Activated B cell treated with CpG ODN at 0.5 μM for 24 hours (primary cell): ENCODE measurements at regions of chr10 and their contacts with region 1.

Region 1: DNA sequence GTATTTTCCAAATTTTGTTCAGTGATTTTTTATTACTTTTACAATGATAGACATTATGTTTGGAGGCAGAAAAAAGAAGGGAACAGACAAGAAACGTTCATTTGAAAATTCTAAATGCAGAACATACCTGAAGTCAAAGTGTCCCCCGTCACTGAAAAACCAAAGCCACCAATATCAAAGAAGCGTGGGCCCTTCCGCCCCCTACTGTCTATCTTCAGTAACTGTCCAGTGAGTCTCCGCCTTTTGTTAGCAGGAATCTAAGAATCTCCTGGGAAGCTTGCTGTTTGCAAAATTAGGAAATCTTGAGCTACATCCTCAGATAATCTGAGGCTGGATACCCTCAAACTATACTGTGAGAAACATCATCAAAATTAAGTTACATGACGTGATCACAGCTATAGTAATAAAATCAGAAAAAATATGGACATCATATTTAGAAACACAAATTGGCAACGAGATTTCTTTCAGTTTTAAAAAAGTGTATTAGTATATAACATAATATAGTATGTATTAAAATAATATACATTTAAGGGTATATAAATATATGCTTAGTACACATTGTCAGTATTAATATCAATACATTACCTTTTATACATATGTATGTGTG is 169.3 kb upstream of the AKR1E2 start:
- DNase-seq: no peak
- ATAC-seq: peak; percentile 52
- H3K4me3 Mint-ChIP-seq: no peak overlapping the region
- H3K27ac Mint-ChIP-seq: no peak overlapping the region
- H3K4me1 Mint-ChIP-seq: peaks cover 5% of the 10 kb centered on the region
- H3K27me3 Mint-ChIP-seq: peaks cover 2% of the 10 kb centered on the region
- CTCF ChIP-seq: no peak

Region 2: DNA sequence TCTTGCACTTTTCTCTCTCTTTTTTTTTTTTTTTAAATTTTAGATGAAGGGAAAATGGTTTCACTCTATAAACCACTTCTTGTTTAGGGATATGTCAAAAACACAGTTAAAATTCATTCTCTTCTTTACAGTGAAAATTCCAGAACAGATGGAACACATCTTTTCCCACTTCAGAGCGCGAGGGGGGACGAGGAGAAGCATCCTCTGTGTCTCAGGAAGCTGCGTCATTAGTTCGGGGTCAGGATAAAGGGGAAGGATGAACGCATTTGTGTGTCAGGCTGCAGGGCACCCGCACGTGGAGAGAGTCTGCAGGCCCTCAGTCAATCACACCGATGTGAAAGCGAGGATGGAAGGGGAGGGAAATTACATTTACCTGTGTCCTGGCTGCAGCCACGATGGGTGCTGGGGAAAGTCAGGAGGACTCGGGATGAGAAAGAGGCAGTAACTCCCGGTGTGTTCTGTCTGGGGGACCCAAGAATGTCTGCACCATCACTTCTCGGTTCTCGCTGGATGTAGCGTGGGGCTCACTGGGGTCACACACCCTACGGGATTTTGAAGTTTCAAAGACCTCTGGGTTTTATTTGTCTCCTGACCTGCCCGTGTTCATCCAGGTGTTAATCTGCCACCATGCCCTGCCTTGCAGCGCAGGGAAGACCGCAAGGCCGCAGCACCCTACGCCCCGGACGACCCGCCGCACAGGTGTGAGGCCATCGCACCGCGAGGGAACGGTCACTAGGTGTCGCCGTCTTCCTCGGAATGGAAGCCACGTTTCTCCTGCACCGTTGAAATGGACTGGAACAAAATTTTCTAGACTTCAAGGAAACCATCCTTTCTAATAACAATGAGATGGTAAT is 1417.4 kb before region 1 on chr10:
- CTCF ChIA-PET with region 1: interaction called, 21 read pairs
- POLR2A ChIA-PET with region 1: no interaction called
- intact Hi-C with region 1: loop called (anchors 1 kb)
- DNase-seq: peak; percentile 66
- ATAC-seq: peak; percentile 85
- H3K4me3 Mint-ChIP-seq: no peak overlapping the region
- H3K27ac Mint-ChIP-seq: no peak overlapping the region
- H3K4me1 Mint-ChIP-seq: peaks cover 5% of the 10 kb centered on the region
- H3K27me3 Mint-ChIP-seq: peaks cover 6% of the 10 kb centered on the region
- CTCF ChIP-seq: no peak

Region 3: GRCh38 chr10:3584941-3585340 is 1071.7 kb before region 1 on chr10:
- CTCF ChIA-PET with region 1: no interaction called
- POLR2A ChIA-PET with region 1: no interaction called
- intact Hi-C with region 1: loop called (anchors 1 kb)
- DNase-seq: no peak
- ATAC-seq: no peak
- H3K4me3 Mint-ChIP-seq: no peak overlapping the region
- H3K27ac Mint-ChIP-seq: no peak overlapping the region
- H3K4me1 Mint-ChIP-seq: no peaks in the 10 kb centered on the region
- H3K27me3 Mint-ChIP-seq: no peaks in the 10 kb centered on the region
- CTCF ChIP-seq: no peak

Region 4: DNA sequence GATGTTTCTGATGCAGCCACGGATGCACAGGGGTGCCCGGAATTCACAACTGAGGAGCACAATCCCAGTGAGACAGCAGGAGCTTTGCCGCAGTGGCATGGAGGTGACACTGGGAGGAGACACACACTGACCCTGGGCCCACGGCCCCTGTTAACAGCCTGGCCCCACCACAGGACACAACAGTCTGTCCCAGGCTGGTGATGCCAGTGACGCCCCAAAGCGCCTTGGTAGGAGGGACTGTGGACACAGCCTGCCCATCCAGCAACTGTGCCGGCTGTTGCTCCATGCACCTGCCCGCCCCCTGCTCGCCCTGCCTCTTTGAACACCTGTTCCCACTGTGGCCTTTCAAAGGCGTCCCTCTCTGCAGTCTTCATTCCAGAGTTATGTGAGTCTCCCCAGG is 921.5 kb before region 1 on chr10:
- CTCF ChIA-PET with region 1: interaction called, 6 read pairs
- POLR2A ChIA-PET with region 1: no interaction called
- intact Hi-C with region 1: loop called (anchors 1 kb)
- DNase-seq: no peak
- ATAC-seq: peak; percentile 74
- H3K4me3 Mint-ChIP-seq: no peak overlapping the region
- H3K27ac Mint-ChIP-seq: no peak overlapping the region
- H3K4me1 Mint-ChIP-seq: peaks cover 10% of the 10 kb centered on the region
- H3K27me3 Mint-ChIP-seq: no peaks in the 10 kb centered on the region
- CTCF ChIP-seq: no peak

Region 5: GRCh38 chr10:4498711-4499251 is 157.9 kb before region 1 on chr10:
- CTCF ChIA-PET with region 1: no interaction called
- POLR2A ChIA-PET with region 1: no interaction called
- intact Hi-C with region 1: no loop called
- DNase-seq: no peak
- ATAC-seq: no peak
- H3K4me3 Mint-ChIP-seq: no peak overlapping the region
- H3K27ac Mint-ChIP-seq: no peak overlapping the region
- H3K4me1 Mint-ChIP-seq: no peaks in the 10 kb centered on the region
- H3K27me3 Mint-ChIP-seq: peaks cover 3% of the 10 kb centered on the region
- CTCF ChIP-seq: no peak